ENCODE measurements at regions of chr15 and their contacts with region 1.

Region 1: DNA sequence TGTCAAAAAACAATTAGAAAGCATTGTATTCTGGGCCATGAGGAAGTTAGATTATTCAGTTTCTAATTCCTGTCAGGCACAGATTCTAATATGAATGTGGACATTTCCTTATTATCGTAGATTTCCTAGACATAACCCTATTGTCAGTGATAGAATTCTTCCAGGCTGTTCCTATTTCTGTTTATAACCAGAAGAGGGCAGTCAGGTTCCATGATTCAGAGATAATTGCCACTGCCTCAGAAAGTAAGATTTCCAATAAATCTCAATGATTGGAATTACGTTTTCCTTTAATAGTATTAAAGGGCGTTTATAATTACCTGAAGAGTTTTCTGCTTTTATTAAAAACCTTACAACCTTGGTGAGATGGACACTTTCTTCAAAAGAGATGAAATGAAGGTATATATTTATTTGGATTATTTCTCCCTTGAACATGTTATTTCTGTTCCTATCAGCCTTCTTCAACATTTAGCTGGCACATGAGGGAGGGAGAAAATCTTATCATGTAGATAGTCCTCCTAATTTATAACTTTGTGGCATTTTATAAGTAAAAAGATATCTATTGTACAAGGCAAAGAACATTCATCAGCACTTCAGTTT is 439.2 kb downstream of the MCTP2 start:
- DNase-seq: no peak
- ATAC-seq: no peak
- H3K4me3 Mint-ChIP-seq: no peak overlapping the region
- H3K27ac Mint-ChIP-seq: no peak overlapping the region
- H3K4me1 Mint-ChIP-seq: peaks cover 27% of the 10 kb centered on the region
- H3K27me3 Mint-ChIP-seq: no peaks in the 10 kb centered on the region; the same call in 1 of the 2 replicates
- CTCF ChIP-seq: peak; percentile 37; the same call in 1 of the 2 replicates

Region 2: DNA sequence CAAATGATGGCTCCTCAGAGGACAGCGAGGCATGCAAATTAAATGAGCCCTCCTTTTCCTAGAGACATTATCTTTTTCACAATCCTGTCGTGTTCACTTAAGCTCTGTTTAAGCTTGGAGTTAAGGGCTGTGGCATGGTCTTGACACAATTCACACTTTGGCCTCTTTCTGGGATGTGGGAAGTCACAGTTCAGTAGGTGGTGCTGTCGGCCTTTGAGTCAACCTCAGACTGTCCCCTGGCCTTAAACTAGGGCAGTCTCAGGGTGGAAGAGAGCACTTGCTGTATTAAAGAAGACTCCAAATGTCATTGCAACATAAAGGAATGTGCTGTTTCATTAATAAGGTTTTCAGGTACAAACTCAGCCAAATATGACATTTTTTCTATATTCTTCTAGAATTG is 88.2 kb before region 1 on chr15:
- CTCF ChIA-PET with region 1: interaction called, 39 read pairs
- POLR2A ChIA-PET with region 1: no interaction called
- DNase-seq: peak; percentile 54
- ATAC-seq: peak; percentile 95
- H3K4me3 Mint-ChIP-seq: no peak overlapping the region
- H3K27ac Mint-ChIP-seq: no peak overlapping the region
- H3K4me1 Mint-ChIP-seq: peaks cover 20% of the 10 kb centered on the region
- H3K27me3 Mint-ChIP-seq: no peaks in the 10 kb centered on the region
- CTCF ChIP-seq: no peak

Region 3: DNA sequence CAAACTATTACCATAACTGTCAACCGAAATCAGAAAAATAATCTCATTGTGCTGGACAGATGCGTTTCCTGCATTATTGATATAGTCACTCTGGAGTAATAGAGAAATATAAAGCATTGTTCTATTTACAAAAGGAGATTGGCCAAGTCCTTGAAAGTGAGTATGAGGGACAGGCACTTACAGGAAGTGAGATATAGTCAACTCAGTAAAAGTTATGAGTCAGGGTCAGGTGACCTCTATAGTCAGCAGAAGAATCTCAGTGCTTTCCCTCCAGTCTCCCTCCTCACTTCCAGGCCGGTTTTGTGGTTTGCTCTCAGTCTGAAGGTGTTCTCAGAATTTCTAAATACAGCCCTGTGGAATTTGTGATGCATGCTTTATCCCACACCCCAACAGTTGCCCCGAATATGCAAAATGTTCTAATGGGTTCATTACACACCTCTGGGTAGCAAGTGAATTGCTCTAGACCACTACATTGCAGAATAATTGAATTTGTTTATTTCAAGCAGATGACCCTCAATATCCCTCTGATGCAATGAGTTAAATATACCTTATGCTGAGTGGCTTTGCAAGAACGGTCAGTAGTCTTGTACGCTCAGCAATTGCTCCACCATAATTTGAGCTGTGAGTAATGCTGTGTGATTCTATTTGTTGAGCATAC is 348.5 kb after region 1 on chr15:
- CTCF ChIA-PET with region 1: interaction called, 35 read pairs
- POLR2A ChIA-PET with region 1: no interaction called
- DNase-seq: no peak
- ATAC-seq: no peak
- H3K4me3 Mint-ChIP-seq: no peak overlapping the region
- H3K27ac Mint-ChIP-seq: 0 out of 2 replicates have a peak overlapping the region, but pooled peaks have one; percentile 27
- H3K4me1 Mint-ChIP-seq: peaks cover 23% of the 10 kb centered on the region
- H3K27me3 Mint-ChIP-seq: no peaks in the 10 kb centered on the region
- CTCF ChIP-seq: no peak

Region 4: GRCh38 chr15:95025924-95026728 is 355.6 kb after region 1 on chr15:
- CTCF ChIA-PET with region 1: interaction called, 35 read pairs
- POLR2A ChIA-PET with region 1: no interaction called
- DNase-seq: peak; percentile 72
- ATAC-seq: peak; percentile 95
- H3K4me3 Mint-ChIP-seq: no peak overlapping the region
- H3K27ac Mint-ChIP-seq: no peak overlapping the region
- H3K4me1 Mint-ChIP-seq: no peaks in the 10 kb centered on the region
- H3K27me3 Mint-ChIP-seq: no peaks in the 10 kb centered on the region
- CTCF ChIP-seq: peak; percentile 35; the same call in 1 of the 2 replicates